Posterior cingulate gyrus (tissue), 11 donors: ENCODE measurements at regions of chr12 and their contacts with region 1.

Region 1: GRCh38 chr12:104381731-104382480 is 74.8 kb upstream of the CHST11 start:
- DNase-seq: peak; percentile 58 to 95 (median 81)

Region 2: GRCh38 chr12:104877123-104877705 is 495.3 kb after region 1 on chr12:
- intact Hi-C with region 1: loop called (anchors 2 kb)
- DNase-seq: peak in 6 of 10 donors; percentile 8 to 83 (median 38)

Region 3: GRCh38 chr12:105053116-105053572 is 671.2 kb after region 1 on chr12:
- intact Hi-C with region 1: loop called (anchors 1 kb)
- DNase-seq: peak; percentile 20 to 93 (median 74)